ENCODE measurements at regions of chr6 and their contacts with region 1.

Region 1: GRCh38 chr6:20393297-20393696 is 8.4 kb upstream of the E2F3 start:
- DNase-seq: no peak
- H3K4me3 ChIP-seq: no peak overlapping the region
- H3K27ac ChIP-seq: no peak overlapping the region
- H3K4me1 ChIP-seq: no peaks in the 10 kb centered on the region
- H3K27me3 ChIP-seq: no peaks in the 10 kb centered on the region
- CTCF ChIP-seq: no peak
- POLR2A ChIP-seq: no peak

Region 2: GRCh38 chr6:20117474-20117873 is 275.8 kb before region 1 on chr6:
- intact Hi-C with region 1: loop called (anchors 5 kb)
- DNase-seq: no peak
- H3K4me3 ChIP-seq: no peak overlapping the region
- H3K27ac ChIP-seq: no peak overlapping the region
- H3K4me1 ChIP-seq: no peaks in the 10 kb centered on the region
- H3K27me3 ChIP-seq: no peaks in the 10 kb centered on the region
- CTCF ChIP-seq: no peak
- POLR2A ChIP-seq: no peak